Panc1 (cell line): ENCODE measurements at regions of chr12 and their contacts with region 1.

Region 1: GRCh38 chr12:63103494-63104131 is 47.4 kb downstream of the AVPR1A start:
- DNase-seq: peak; percentile 10
- ATAC-seq: no peak
- H3K4me3 ChIP-seq: no peak overlapping the region
- H3K27ac ChIP-seq: no peak overlapping the region
- H3K4me1 ChIP-seq: no peaks in the 10 kb centered on the region
- H3K27me3 ChIP-seq: no peaks in the 10 kb centered on the region; the same call in 1 of the 2 replicates
- CTCF ChIP-seq: peak; percentile 80; the same call in 1 of the 2 replicates

Region 2: GRCh38 chr12:62767496-62767895 is 336.1 kb before region 1 on chr12:
- CTCF ChIA-PET with region 1: no interaction called
- POLR2A ChIA-PET with region 1: no interaction called
- in situ Hi-C with region 1: no loop called
- intact Hi-C with region 1: no loop called
- DNase-seq: no peak
- ATAC-seq: 0 out of 2 replicates have a peak, but pooled peaks have one; percentile 45
- H3K4me3 ChIP-seq: no peak overlapping the region
- H3K27ac ChIP-seq: no peak overlapping the region; the same call in 1 of the 2 replicates
- H3K4me1 ChIP-seq: no peaks in the 10 kb centered on the region
- H3K27me3 ChIP-seq: no peaks in the 10 kb centered on the region
- CTCF ChIP-seq: no peak

Region 3: DNA sequence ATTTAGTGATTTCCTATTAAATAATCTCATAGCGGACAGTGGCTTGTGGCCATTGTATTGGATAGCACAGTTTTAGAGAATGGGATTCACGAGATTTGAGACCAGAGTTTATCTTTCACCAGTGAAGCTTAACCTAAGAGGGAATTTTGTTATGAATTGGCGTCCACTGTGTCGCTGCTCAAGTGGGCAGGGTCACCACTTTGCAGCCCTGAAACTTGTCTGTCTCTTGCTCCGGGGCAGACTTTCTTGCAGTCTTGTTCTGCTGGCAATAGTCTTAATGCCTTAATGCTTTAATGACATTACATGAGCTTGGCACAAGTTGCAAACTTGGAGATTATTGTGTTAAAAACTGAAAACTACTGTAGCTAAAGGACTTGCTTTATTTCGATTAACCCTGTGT is 95.9 kb before region 1 on chr12:
- CTCF ChIA-PET with region 1: interaction called, 12 read pairs
- POLR2A ChIA-PET with region 1: no interaction called
- in situ Hi-C with region 1: no loop called
- intact Hi-C with region 1: no loop called
- DNase-seq: no peak
- ATAC-seq: no peak
- H3K4me3 ChIP-seq: no peak overlapping the region
- H3K27ac ChIP-seq: no peak overlapping the region
- H3K4me1 ChIP-seq: no peaks in the 10 kb centered on the region
- H3K27me3 ChIP-seq: peaks cover 8% of the 10 kb centered on the region
- CTCF ChIP-seq: no peak

Region 4: DNA sequence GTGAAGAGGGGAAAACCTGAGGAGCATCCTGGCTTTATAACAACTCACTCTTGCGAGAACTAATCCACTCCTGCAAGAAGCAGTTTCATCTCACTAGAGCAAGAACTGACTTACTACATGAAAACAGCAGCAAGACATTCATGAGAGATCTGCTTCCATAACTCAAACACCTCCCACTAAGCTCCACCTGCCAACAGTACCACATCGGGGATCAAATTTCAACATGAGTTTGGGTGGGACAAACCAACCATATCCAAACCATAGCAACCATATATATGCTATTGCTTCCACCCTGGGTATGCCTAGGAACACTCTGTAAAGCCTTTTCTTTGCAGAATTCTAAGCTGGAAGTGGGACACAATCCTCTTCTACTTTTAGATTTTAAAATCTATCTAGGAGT is 61.3 kb after region 1 on chr12:
- CTCF ChIA-PET with region 1: no interaction called
- POLR2A ChIA-PET with region 1: no interaction called
- in situ Hi-C with region 1: no loop called
- intact Hi-C with region 1: no loop called
- DNase-seq: no peak
- ATAC-seq: no peak
- H3K4me3 ChIP-seq: no peak overlapping the region
- H3K27ac ChIP-seq: no peak overlapping the region
- H3K4me1 ChIP-seq: no peaks in the 10 kb centered on the region
- H3K27me3 ChIP-seq: peaks cover 7% of the 10 kb centered on the region; the same call in 1 of the 2 replicates
- CTCF ChIP-seq: no peak

Region 5: DNA sequence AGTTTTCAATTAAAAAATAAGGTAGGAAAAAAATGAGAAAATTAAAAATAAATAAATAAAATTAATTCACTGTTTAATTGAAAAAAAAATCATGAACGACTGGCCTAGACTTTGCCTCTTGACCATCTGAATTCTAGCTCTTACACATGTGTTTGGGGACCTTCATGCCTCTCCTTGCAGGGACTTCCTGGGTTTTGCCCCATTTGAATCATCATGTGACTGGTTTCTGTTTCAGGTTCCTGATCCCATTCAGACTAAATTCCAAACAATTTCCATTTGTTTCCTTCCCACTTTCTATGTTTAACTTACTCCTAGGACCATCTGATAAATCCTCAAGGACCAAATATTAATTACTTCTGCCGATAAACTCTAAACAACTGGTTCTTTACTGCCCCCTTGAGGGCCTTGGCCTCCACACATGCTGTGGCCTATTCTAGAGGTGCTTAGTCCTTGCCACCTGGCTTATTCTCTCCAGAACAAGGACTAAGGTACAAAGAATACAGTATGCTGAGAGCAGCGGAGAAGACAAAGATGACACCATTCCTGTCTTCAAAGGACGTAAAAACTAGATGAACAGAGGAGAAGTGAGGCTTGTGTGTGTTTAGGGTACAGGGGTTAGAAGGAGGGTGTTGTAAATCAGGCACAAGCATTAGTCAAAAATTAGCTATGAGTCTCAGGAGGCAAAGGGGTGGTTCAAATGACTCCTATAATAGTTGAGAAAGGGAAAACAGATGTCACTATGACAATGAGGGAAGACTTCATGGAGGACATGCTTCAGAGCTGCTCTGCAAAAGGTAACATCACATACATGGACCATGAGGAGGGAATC is 173.1 kb after region 1 on chr12:
- CTCF ChIA-PET with region 1: no interaction called
- POLR2A ChIA-PET with region 1: no interaction called
- in situ Hi-C with region 1: no loop called
- intact Hi-C with region 1: loop called (anchors 2 kb)
- DNase-seq: no peak
- ATAC-seq: peak; percentile 69; the same call in 1 of the 2 replicates
- H3K4me3 ChIP-seq: no peak overlapping the region
- H3K27ac ChIP-seq: no peak overlapping the region
- H3K4me1 ChIP-seq: no peaks in the 10 kb centered on the region
- H3K27me3 ChIP-seq: no peaks in the 10 kb centered on the region
- CTCF ChIP-seq: peak; percentile 83

Region 6: GRCh38 chr12:63420206-63420644 is 316.6 kb after region 1 on chr12:
- CTCF ChIA-PET with region 1: no interaction called
- POLR2A ChIA-PET with region 1: no interaction called
- in situ Hi-C with region 1: no loop called
- intact Hi-C with region 1: loop called (anchors 10 kb)
- DNase-seq: peak; percentile 36
- ATAC-seq: peak; percentile 91
- H3K4me3 ChIP-seq: no peak overlapping the region
- H3K27ac ChIP-seq: no peak overlapping the region
- H3K4me1 ChIP-seq: no peaks in the 10 kb centered on the region
- H3K27me3 ChIP-seq: peaks cover 2% of the 10 kb centered on the region; the same call in 1 of the 2 replicates
- CTCF ChIP-seq: peak; percentile 82

Region 7: DNA sequence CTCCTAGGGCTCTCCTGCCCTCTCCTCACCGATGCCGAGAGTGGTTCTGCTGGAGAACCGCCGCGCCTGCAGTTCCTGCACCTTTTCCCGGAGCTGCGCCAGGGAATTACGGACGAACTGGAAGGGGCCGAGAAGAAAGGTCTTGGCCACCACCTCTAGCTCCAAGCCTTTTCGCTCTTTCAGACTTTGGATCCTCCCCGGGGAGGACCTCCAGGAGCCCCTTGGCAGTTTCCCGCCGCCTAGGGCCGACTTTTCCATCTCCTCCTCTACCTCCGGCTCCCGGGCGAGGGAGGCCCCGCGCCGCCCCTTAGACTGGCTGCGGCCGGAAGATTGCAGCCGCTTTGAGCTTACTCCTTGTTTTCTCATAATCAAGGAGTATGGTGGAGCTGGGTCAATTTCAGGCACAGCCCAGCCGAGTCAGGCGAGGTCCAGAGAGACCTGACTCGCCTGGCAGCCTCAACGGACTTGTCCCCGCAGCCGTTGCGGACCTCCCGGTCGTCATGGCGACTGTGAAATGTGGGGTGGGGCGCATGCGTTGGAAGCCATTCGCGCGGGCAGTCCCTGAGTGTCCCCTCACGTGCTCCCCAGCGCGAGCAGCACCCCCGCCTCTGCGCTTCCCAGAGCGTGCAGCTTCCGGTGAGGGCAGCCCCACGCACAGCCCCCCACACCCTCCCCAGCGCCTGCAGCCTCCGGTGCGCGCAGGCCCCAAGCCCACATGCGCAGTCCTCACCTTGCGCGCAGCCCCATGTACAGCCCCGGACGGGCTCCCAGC is 564.6 kb after region 1 on chr12 and contains the start of gene DPY19L2:
- CTCF ChIA-PET with region 1: no interaction called
- POLR2A ChIA-PET with region 1: no interaction called
- in situ Hi-C with region 1: no loop called
- intact Hi-C with region 1: loop called (anchors 10 kb)
- DNase-seq: no peak
- ATAC-seq: peak; percentile 97
- H3K4me3 ChIP-seq: peak within 1 kb of the TSS; percentile 73 to 76
- H3K27ac ChIP-seq: peak within 1 kb of the TSS; percentile 85
- H3K4me1 ChIP-seq: no peaks in the 10 kb centered on the region
- H3K27me3 ChIP-seq: no peaks in the 10 kb centered on the region
- CTCF ChIP-seq: no peak
- total RNA-seq, gene DPY19L2: 6.6 TPM

Region 8: GRCh38 chr12:63802012-63802608 is 698.5 kb after region 1 on chr12:
- CTCF ChIA-PET with region 1: no interaction called
- POLR2A ChIA-PET with region 1: no interaction called
- in situ Hi-C with region 1: no loop called
- intact Hi-C with region 1: loop called (anchors 5 kb)
- DNase-seq: no peak
- ATAC-seq: peak; percentile 72; the same call in 1 of the 2 replicates
- H3K4me3 ChIP-seq: no peak overlapping the region
- H3K27ac ChIP-seq: no peak overlapping the region
- H3K4me1 ChIP-seq: no peaks in the 10 kb centered on the region
- H3K27me3 ChIP-seq: no peaks in the 10 kb centered on the region
- CTCF ChIP-seq: peak; percentile 71; the same call in 1 of the 2 replicates